Psoas muscle (tissue), 8 donors: ENCODE measurements at regions of chr1 and their contacts with region 1.

Region 1: DNA sequence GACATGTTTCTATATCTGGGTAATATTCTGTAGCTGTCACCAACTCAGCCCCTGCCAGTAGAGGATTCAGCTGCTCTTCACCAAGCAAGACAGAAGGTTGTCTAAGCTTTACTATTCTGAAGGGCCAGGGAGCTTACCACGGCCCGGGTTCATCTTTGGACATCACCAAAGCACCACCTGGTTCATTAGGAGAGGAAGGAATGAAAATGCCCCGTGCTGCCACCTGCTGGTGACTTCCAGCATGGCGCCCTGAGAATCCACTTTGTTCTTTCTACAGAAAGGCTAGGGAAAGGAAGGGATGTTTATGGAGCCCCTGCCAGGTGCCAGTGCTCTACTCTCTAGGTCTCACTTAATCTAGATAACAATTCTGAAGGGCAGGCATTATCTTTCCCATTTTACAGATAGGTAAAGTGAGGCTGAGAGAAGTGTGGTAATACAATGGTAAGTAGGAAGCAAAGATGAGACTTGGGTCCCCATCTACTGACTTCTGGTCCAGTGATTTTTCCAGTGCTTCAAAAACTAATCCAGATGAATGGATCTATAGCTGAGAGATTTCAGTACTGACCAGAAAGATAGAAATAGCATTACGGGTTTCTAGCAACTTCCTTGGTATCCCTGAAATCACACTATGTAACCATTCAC is 79.5 kb downstream of the BEND5 start:
- DNase-seq: peak; percentile 54 to 72
- ATAC-seq: peak in 3 of 4 donors; percentile 73 to 78 (median 77)
- H3K4me3 ChIP-seq: no peak overlapping the region
- H3K27ac ChIP-seq: no peak overlapping the region
- H3K4me1 ChIP-seq: no peaks in the 10 kb centered on the region
- H3K27me3 ChIP-seq: peaks cover 0 to 10% (median 5%) of the 10 kb centered on the region in 3 donors
- CTCF ChIP-seq: peak; percentile 94

Region 2: GRCh38 chr1:47840393-47841190 is 856.6 kb before region 1 on chr1:
- intact Hi-C with region 1: no loop called
- DNase-seq: peak in 1 of 2 donors; percentile 32
- ATAC-seq: no peak
- H3K4me3 ChIP-seq: no peak overlapping the region
- H3K27ac ChIP-seq: no peak overlapping the region
- H3K4me1 ChIP-seq: no peaks in the 10 kb centered on the region
- H3K27me3 ChIP-seq: no peaks in the 10 kb centered on the region
- CTCF ChIP-seq: no peak

Region 3: GRCh38 chr1:48109390-48110013 is 587.7 kb before region 1 on chr1:
- intact Hi-C with region 1: no loop called
- DNase-seq: no peak
- ATAC-seq: peak in 1 of 4 donors; percentile 63
- H3K4me3 ChIP-seq: no peak overlapping the region
- H3K27ac ChIP-seq: no peak overlapping the region
- H3K4me1 ChIP-seq: no peaks in the 10 kb centered on the region
- H3K27me3 ChIP-seq: no peaks in the 10 kb centered on the region
- CTCF ChIP-seq: peak; percentile 71

Region 4: DNA sequence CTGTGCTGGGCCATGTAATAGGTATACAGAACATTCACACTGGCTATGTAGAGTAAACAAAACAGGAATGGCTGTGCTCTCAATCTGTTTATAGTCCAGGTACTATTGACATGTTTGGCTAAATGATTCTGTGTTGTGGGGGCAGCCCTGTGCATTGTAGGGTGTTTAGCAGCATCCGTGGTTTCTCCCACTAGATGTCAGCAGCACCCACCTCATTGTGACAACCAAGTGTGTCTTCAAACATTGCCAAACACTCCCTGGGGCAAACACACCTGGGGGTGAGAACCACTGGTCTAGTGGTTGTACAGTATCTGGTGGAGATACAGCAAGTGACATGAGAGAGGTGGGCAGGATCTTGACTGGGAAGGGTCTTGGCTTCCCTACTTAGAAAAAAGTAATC is 144.8 kb before region 1 on chr1:
- intact Hi-C with region 1: loop called (anchors 5 kb)
- DNase-seq: no peak
- ATAC-seq: peak; percentile 61 to 76 (median 67)
- H3K4me3 ChIP-seq: no peak overlapping the region
- H3K27ac ChIP-seq: peak overlapping the region; percentile 66
- H3K4me1 ChIP-seq: peaks cover 18% of the 10 kb centered on the region
- H3K27me3 ChIP-seq: no peaks in the 10 kb centered on the region
- CTCF ChIP-seq: peak; percentile 63

Region 5: GRCh38 chr1:48572646-48573261 is 124.4 kb before region 1 on chr1:
- intact Hi-C with region 1: loop called (anchors 2 to 5 kb)
- DNase-seq: peak in 1 of 2 donors; percentile 19
- ATAC-seq: peak; percentile 43 to 79 (median 64)
- H3K4me3 ChIP-seq: no peak overlapping the region
- H3K27ac ChIP-seq: no peak overlapping the region
- H3K4me1 ChIP-seq: peaks cover 7% of the 10 kb centered on the region
- H3K27me3 ChIP-seq: no peaks in the 10 kb centered on the region
- CTCF ChIP-seq: peak; percentile 51